Thyroid gland (tissue), 4 donors: ENCODE measurements at regions of chr21 and their contacts with region 1.

Region 1: DNA sequence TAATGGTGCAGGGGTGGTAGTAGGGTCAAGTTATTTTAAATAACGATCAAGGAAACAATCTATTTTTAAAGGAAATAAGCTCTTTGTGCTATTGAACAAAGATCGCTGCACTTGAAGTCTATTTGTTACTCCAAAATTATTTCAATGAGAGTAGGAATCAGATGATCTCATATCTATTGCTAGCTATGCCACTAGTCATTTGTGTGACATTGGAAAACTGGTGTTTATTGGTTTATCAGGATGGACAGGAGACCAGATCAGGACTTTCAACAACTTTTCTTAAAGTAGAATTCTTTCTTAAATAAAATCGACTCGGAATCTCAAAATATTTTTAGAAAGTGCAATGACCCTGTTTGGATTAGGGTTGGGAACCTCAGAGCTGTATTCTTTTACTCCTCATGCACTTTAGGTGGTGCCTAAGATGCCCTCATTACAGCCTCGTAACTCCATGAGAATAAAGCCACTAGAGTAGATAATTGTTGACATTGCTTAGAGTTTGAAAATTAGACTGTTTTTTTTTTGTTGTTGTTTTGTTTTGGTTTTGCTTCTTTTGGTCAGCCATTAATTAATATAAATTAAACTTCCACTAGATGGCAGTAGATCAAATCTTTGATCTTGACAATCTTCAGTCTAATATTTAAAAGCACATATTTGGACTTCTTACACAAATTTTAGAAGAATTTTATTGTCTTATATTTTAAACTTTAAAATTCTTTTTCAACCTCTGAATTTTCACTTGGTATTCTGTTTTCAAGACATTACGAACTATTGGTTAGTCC is 352.4 kb downstream of the USP25 start:
- DNase-seq: no peak
- H3K4me3 ChIP-seq: no peak overlapping the region
- H3K27ac ChIP-seq: peak overlapping the region in 1 of 3 donors; percentile 0
- H3K4me1 ChIP-seq: no peaks in the 10 kb centered on the region
- H3K27me3 ChIP-seq: no peaks in the 10 kb centered on the region
- CTCF ChIP-seq: peak in 5 of 6 experiments; percentile 36 to 76 (median 57)
- POLR2A ChIP-seq: no peak

Region 2: GRCh38 chr21:15826908-15827601 is 255.2 kb before region 1 on chr21:
- intact Hi-C with region 1: no loop called
- DNase-seq: no peak
- H3K4me3 ChIP-seq: no peak overlapping the region
- H3K27ac ChIP-seq: no peak overlapping the region
- H3K4me1 ChIP-seq: no peaks in the 10 kb centered on the region
- H3K27me3 ChIP-seq: no peaks in the 10 kb centered on the region
- CTCF ChIP-seq: no peak
- POLR2A ChIP-seq: no peak

Region 3: GRCh38 chr21:16269476-16269875 is 187.2 kb after region 1 on chr21:
- intact Hi-C with region 1: no loop called
- DNase-seq: no peak
- H3K4me3 ChIP-seq: no peak overlapping the region
- H3K27ac ChIP-seq: no peak overlapping the region
- H3K4me1 ChIP-seq: no peaks in the 10 kb centered on the region
- H3K27me3 ChIP-seq: no peaks in the 10 kb centered on the region
- CTCF ChIP-seq: no peak
- POLR2A ChIP-seq: no peak

Region 4: DNA sequence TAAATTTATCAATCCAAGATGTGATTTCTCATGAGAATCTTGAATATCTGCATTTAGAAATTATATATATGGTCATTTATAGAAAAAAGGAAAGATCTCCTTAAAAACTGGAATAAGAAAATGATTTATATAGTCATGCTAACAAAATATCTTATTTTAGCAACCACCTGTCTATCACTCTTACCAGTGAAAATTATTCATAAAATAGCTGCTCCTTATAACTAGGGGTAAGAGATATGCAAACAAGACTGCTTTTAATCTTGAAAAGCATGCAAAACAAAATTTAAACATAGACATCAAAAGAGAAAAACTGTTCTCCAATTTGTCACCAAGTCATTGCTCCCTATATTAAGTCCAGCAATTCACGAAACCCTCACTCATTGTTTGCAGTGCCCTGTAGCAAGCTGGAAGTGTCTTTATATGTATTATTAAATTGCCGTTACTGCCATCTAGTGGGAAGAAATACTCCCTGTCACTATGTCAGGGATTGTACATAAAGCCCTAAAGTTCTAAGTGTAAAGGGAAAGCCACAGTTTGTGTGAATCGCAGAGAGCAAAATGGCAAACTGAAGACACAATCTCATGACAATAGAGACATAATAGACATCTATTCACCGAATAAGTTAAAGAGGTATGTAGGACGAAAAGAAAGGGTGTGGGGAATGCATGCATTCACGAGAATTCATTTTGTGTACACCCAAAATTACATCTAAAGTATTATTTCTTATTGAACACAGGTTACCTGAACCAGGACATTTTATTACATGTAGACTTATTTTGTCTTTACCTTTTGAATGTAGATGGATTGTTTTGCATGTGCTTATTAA is 248.1 kb after region 1 on chr21:
- intact Hi-C with region 1: loop called (anchors 5 kb)
- DNase-seq: peak; percentile 11 to 23
- H3K4me3 ChIP-seq: no peak overlapping the region
- H3K27ac ChIP-seq: no peak overlapping the region
- H3K4me1 ChIP-seq: peaks cover 0 to 6% of the 10 kb centered on the region in 2 donors
- H3K27me3 ChIP-seq: no peaks in the 10 kb centered on the region
- CTCF ChIP-seq: peak; percentile 23 to 84 (median 74)
- POLR2A ChIP-seq: no peak